GM12878 (cell line): ENCODE measurements at regions of chr4 and their contacts with region 1.

Region 1: DNA sequence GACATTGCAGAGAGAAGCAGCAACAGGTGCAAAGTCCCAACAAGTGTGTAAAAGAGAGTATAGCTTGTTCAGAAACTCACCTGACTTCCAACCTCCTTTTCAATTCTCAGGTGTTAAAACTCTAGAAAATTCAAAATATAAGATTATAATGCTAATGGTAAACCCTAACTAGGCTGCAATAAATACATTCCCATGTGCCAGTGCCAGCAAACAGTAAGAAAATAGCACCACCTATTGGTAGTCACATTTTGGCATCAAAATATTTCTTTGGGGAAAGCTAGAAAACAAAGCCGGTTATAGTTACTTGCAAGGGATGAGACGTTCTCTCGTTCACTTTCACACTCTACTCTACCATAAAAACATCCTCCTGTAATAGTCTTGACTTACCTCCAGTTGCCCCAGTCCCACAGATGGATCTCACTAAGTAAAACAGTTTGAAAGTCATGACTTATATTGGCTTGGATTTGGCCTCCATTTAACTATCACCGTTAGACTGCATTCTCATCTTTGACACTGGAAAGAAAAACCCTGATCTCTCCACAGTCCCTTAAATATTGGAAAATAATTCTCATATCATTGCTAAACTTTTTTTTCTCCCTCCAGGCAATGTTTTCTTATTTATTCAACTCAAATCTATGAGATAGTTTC is 9.6 kb downstream of the BMP3 start:
- DNase-seq: no peak
- ATAC-seq: peak; percentile 82
- H3K4me3 ChIP-seq: no peak overlapping the region
- H3K27ac ChIP-seq: no peak overlapping the region
- H3K4me1 ChIP-seq: 0 out of 2 replicates have a peak, but pooled peaks cover 3% of the 10 kb centered on the region
- H3K27me3 ChIP-seq: no peaks in the 10 kb centered on the region
- CTCF ChIP-seq: peak; percentile 59 to 81 (median 68); a peak in 5 of 6 replicates
- EP300 ChIP-seq: no peak
- POLR2A ChIP-seq: no peak
- RAD21 ChIP-seq: peak; percentile 92

Region 2: GRCh38 chr4:80610845-80611677 is 429.1 kb before region 1 on chr4:
- CTCF ChIA-PET with region 1: interaction called, 22 read pairs
- POLR2A ChIA-PET with region 1: no interaction called
- RAD21 ChIA-PET with region 1: interaction called, 9 read pairs
- SMC1A ChIA-PET with region 1: interaction called, 28 read pairs
- in situ Hi-C with region 1: loop called (anchors 10 kb)
- intact Hi-C with region 1: loop called (anchors 2 kb)
- DNase-seq: peak; percentile 63
- ATAC-seq: peak; percentile 94
- H3K4me3 ChIP-seq: no peak overlapping the region
- H3K27ac ChIP-seq: no peak overlapping the region
- H3K4me1 ChIP-seq: 0 out of 2 replicates have a peak, but pooled peaks cover 6% of the 10 kb centered on the region
- H3K27me3 ChIP-seq: no peaks in the 10 kb centered on the region
- CTCF ChIP-seq: no peak
- EP300 ChIP-seq: peak; percentile 56 to 65; a peak in 2 of 4 replicates
- POLR2A ChIP-seq: no peak
- RAD21 ChIP-seq: no peak

Region 3: GRCh38 chr4:80989921-80990544 is 50.1 kb before region 1 on chr4:
- CTCF ChIA-PET with region 1: interaction called, 44 read pairs
- POLR2A ChIA-PET with region 1: no interaction called
- RAD21 ChIA-PET with region 1: interaction called, 16 read pairs
- SMC1A ChIA-PET with region 1: interaction called, 30 read pairs
- in situ Hi-C with region 1: no loop called
- intact Hi-C with region 1: loop called (anchors 2 kb)
- DNase-seq: peak; percentile 26
- ATAC-seq: peak; percentile 85
- H3K4me3 ChIP-seq: no peak overlapping the region
- H3K27ac ChIP-seq: no peak overlapping the region
- H3K4me1 ChIP-seq: no peaks in the 10 kb centered on the region
- H3K27me3 ChIP-seq: no peaks in the 10 kb centered on the region
- CTCF ChIP-seq: peak; percentile 58 to 68 (median 61)
- EP300 ChIP-seq: no peak
- POLR2A ChIP-seq: no peak
- RAD21 ChIP-seq: peak; percentile 80

Region 4: GRCh38 chr4:81052119-81053068 is 12.3 kb after region 1 on chr4:
- CTCF ChIA-PET with region 1: interaction called, 126 read pairs
- POLR2A ChIA-PET with region 1: no interaction called
- RAD21 ChIA-PET with region 1: interaction called, 49 read pairs
- SMC1A ChIA-PET with region 1: interaction called, 144 read pairs
- in situ Hi-C with region 1: no loop called
- intact Hi-C with region 1: no loop called
- DNase-seq: peak; percentile 91
- ATAC-seq: peak; percentile 99
- H3K4me3 ChIP-seq: no peak overlapping the region
- H3K27ac ChIP-seq: no peak overlapping the region; the same call in 1 of the 2 replicates
- H3K4me1 ChIP-seq: peaks cover 14% of the 10 kb centered on the region
- H3K27me3 ChIP-seq: no peaks in the 10 kb centered on the region
- CTCF ChIP-seq: peak; percentile 61 to 73 (median 66)
- EP300 ChIP-seq: peak; percentile 84 to 91; a peak in 3 of 4 replicates
- POLR2A ChIP-seq: no peak
- RAD21 ChIP-seq: peak; percentile 76

Region 5: DNA sequence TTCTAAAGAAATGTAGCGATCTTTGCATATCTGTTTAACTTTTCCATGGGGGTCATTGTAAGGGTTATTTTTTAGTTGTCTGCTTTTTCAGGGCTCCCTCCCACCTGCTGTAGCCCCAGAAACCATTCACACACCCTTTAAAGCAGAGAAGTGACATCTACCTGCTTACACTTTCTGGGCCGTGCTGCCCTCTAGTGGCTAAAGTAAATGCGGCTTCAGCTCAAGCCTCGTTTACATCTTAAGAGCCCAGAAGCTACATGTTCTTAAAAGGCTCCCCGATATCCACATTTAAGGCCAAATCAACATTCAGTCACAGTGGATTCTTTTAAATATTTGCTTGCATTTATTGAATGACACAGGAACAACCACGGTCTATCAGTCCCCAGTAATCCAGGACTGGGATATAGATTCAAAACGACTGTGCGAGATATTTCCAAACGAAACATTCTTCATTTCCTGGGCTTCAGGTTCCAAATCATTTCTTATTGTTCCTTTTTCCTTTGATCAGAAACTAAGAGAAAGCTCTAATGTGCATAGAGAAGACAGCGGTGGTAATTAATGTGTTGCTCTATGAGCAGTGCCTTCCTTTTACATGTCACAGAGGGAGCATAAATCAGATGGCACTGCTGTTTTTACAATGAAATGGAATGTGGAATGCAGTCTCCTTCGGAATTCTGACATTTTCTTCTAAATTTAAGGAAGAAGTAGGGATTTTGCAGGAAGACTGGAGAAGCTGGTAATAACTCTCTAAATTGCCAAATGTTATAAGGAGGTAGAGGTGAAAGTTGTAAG is 311.7 kb after region 1 on chr4:
- CTCF ChIA-PET with region 1: interaction called, 12 read pairs
- POLR2A ChIA-PET with region 1: no interaction called
- RAD21 ChIA-PET with region 1: interaction called, 3 read pairs
- SMC1A ChIA-PET with region 1: interaction called, 7 read pairs
- in situ Hi-C with region 1: no loop called
- intact Hi-C with region 1: no loop called
- DNase-seq: peak; percentile 8
- ATAC-seq: peak; percentile 93
- H3K4me3 ChIP-seq: no peak overlapping the region
- H3K27ac ChIP-seq: no peak overlapping the region
- H3K4me1 ChIP-seq: no peaks in the 10 kb centered on the region
- H3K27me3 ChIP-seq: no peaks in the 10 kb centered on the region
- CTCF ChIP-seq: peak; percentile 84 to 95 (median 85)
- EP300 ChIP-seq: no peak
- POLR2A ChIP-seq: no peak
- RAD21 ChIP-seq: peak; percentile 82